PC-9 (cell line): ENCODE measurements at regions of chr2 and their contacts with region 1.

Region 1: GRCh38 chr2:41869542-41870264 is 178.1 kb upstream of the PKDCC start:
- DNase-seq: peak in 1 of 2 experiments; percentile 74
- H3K4me3 ChIP-seq: no peak overlapping the region
- H3K27ac ChIP-seq: no peak overlapping the region
- H3K4me1 ChIP-seq: peaks cover 13% of the 10 kb centered on the region
- H3K27me3 ChIP-seq: no peaks in the 10 kb centered on the region
- CTCF ChIP-seq: peak; percentile 98

Region 2: GRCh38 chr2:41966431-41966893 is 96.8 kb after region 1 on chr2:
- CTCF ChIA-PET with region 1: interaction called, 3 read pairs
- POLR2A ChIA-PET with region 1: interaction called, 3 read pairs
- intact Hi-C with region 1: loop called (anchors 10 kb)
- DNase-seq: peak; percentile 87 to 97
- H3K4me3 ChIP-seq: no peak overlapping the region
- H3K27ac ChIP-seq: peak overlapping the region; percentile 55
- H3K4me1 ChIP-seq: peaks cover 40% of the 10 kb centered on the region
- H3K27me3 ChIP-seq: no peaks in the 10 kb centered on the region
- CTCF ChIP-seq: no peak

Region 3: DNA sequence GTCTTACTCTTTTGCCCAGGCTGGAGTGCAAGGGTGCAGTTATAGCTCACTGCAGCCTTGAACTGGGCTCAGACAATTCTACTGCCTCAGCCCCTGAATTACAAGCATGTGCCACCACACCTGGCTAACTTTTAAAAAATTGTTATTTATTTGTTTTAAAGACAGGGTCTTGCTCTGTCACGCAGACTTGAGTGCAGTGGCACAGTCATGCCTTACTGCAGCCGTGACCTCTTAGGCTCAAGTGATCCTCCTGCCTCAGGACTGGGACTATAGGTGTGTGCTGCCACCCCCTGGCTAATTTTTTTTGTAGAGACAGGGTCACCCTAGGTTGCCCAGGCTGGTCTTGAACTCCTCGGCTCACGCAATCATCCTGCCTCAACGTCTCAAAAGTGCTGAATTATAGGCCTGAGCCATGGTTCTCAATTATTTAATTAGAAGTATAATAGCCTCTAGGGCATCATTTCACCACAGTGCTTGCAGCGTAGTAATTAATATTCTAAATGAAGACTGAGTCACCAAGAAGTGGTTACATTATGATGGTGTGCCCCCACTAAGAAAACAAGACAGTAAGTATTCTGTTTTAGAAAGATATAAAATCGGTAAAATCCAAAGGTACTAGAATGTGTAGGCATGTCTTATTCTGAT is 369.1 kb after region 1 on chr2:
- CTCF ChIA-PET with region 1: interaction called, 12 read pairs
- POLR2A ChIA-PET with region 1: no interaction called
- intact Hi-C with region 1: no loop called
- DNase-seq: peak; percentile 32 to 43
- H3K4me3 ChIP-seq: no peak overlapping the region
- H3K27ac ChIP-seq: peak overlapping the region; percentile 13; the same call in 1 of the 2 replicates
- H3K4me1 ChIP-seq: peaks cover 6% of the 10 kb centered on the region; the same call in 1 of the 2 replicates
- H3K27me3 ChIP-seq: no peaks in the 10 kb centered on the region
- CTCF ChIP-seq: peak; percentile 69